ENCODE measurements at regions of chr1 and their contacts with region 1.

Region 1: DNA sequence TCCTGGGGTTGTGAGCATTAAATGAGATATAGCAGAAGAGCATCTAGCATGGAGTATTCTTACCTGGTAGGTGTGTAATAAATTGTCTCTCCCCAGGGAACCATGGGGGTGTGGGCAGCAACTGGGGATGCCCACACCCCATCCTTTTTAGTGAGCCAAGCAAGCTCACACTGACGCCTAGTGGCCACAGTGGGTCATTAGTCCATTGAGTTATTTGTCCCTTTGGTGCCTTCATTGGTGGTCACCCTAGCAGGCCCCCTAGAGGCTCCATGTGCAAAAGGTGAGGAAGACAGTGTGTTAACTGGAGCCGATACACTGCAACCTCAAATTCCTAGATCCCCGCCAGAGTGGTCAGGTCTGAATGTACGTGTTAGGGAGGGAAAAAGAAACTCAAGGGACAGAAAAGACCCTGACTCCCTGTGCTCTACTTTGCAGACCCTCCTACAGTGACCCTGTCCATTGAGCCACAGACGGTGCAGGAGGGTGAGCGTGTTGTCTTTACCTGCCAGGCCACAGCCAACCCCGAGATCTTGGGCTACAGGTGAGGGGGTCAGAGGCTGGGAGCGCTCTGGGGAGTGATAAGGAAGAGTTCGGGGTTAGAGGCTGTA is 93.3 kb upstream of the CD1D start:
- DNase-seq: no peak
- ATAC-seq: peak; percentile 40

Region 2: GRCh38 chr1:157870490-157870889 is 216.9 kb before region 1 on chr1:
- intact Hi-C with region 1: no loop called
- DNase-seq: no peak
- ATAC-seq: no peak

Region 3: GRCh38 chr1:157963713-157964112 is 123.7 kb before region 1 on chr1:
- intact Hi-C with region 1: loop called (anchors 5 kb)
- DNase-seq: peak; percentile 70
- ATAC-seq: peak; percentile 81

Region 4: GRCh38 chr1:158035976-158036583 is 51.3 kb before region 1 on chr1:
- intact Hi-C with region 1: loop called (anchors 5 kb)
- DNase-seq: no peak
- ATAC-seq: no peak

Measured in Right ventricle myocardium inferior (tissue), 1 donor.